Caco-2 (cell line): ENCODE measurements at regions of chr6 and their contacts with region 1.

Region 1: GRCh38 chr6:143677891-143678791 is at the start of gene PHACTR2:
- DNase-seq: peak; percentile 85 to 86
- H3K4me3 ChIP-seq: peak within 1 kb of the TSS; percentile 88
- H3K4me3 Mint-ChIP-seq: peak within 1 kb of the TSS; percentile 82
- H3K27ac Mint-ChIP-seq: peak within 1 kb of the TSS; percentile 70
- H3K4me1 ChIP-seq: peaks cover 40% of the 10 kb centered on the region
- H3K4me1 Mint-ChIP-seq: peaks cover 18% of the 10 kb centered on the region
- H3K27me3 ChIP-seq: no peaks in the 10 kb centered on the region
- H3K27me3 Mint-ChIP-seq: no peaks in the 10 kb centered on the region
- CTCF ChIP-seq: no peak
- total RNA-seq, gene PHACTR2: 80.8 and 100 TPM in 2 replicates

Region 2: GRCh38 chr6:143652841-143653331 is 25.3 kb before region 1 on chr6:
- CTCF ChIA-PET with region 1: no interaction called
- POLR2A ChIA-PET with region 1: no interaction called
- intact Hi-C with region 1: loop called (anchors 1 kb)
- DNase-seq: peak; percentile 59 to 71
- H3K4me3 ChIP-seq: no peak overlapping the region
- H3K4me3 Mint-ChIP-seq: peak overlapping the region; percentile 51
- H3K27ac Mint-ChIP-seq: peak overlapping the region; percentile 84
- H3K4me1 ChIP-seq: peaks cover 43% of the 10 kb centered on the region
- H3K4me1 Mint-ChIP-seq: peaks cover 45% of the 10 kb centered on the region
- H3K27me3 ChIP-seq: no peaks in the 10 kb centered on the region
- H3K27me3 Mint-ChIP-seq: no peaks in the 10 kb centered on the region
- CTCF ChIP-seq: no peak

Region 3: DNA sequence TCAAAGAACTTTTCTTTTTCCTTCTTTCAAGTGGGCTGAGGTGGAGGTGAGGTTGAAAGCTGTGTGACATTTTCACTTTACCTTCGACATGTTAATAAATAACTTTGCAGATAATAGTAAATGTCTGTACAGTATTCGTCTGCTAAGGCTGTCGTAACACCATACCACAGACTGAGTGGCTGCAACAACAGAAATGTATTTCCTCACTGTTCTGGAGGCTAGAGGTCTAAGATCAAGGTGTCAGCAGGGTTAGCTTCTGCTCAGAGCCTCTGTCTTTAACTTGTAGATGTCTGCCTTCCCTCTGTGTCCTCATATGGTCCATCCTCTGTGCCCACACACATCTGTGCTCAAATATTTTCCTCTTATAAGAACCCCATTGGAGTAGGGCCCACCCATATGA is 14.6 kb after region 1 on chr6:
- CTCF ChIA-PET with region 1: no interaction called
- POLR2A ChIA-PET with region 1: no interaction called
- intact Hi-C with region 1: loop called (anchors 2 kb)
- DNase-seq: peak; percentile 61 to 65
- H3K4me3 ChIP-seq: no peak overlapping the region
- H3K4me3 Mint-ChIP-seq: no peak overlapping the region
- H3K27ac Mint-ChIP-seq: no peak overlapping the region
- H3K4me1 ChIP-seq: peaks cover 66% of the 10 kb centered on the region
- H3K4me1 Mint-ChIP-seq: peaks cover 45% of the 10 kb centered on the region
- H3K27me3 ChIP-seq: no peaks in the 10 kb centered on the region
- H3K27me3 Mint-ChIP-seq: no peaks in the 10 kb centered on the region
- CTCF ChIP-seq: no peak

Region 4: DNA sequence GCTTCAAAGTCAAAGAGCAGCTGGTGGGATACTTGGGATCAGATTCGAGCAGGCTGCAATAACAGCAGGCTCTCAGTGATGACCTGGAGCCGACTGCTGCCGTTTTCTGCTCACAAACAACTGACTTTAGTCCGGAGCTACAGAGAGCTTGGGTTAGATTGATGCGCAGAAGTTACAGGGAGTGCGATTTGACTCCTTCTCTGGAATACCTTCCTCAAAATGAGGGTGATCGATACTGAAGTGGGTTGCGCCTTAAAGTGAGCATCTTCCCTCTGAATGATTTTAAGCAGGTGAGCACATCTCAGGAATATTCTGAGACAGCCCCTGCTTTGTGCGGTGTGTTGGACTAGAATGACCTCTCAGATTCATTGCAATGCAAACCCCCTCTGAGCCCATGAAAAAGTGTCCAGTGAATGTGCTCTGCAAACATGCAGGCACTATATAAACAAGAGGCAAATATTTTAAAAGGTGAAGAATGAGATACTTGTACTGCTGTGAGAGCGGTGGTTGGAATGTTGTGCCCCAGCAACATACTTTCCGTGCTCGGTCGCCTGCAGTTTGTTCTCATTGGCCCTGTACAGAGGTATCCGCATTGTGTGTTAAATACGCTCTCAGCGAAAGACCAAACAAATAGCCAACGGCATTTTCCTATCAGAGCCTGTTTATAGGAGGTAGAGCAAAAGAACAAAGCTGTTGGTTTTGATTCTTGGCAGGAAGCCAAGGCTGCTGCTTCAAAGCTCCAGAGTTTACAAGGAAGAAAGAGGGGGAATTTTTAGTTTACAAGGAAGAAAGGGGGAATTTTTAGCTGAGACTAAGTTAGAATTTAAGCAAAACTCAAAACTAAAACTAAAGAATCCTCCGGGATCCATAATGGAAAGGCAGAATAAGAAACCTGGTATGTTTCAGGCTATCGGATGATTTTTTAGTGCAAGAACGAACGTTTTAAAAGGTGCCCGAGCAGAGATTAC is 67.3 kb after region 1 on chr6:
- CTCF ChIA-PET with region 1: no interaction called
- POLR2A ChIA-PET with region 1: no interaction called
- intact Hi-C with region 1: loop called (anchors 1 kb)
- DNase-seq: peak; percentile 81 to 89
- H3K4me3 ChIP-seq: peak overlapping the region; percentile 21
- H3K4me3 Mint-ChIP-seq: peak overlapping the region; percentile 69
- H3K27ac Mint-ChIP-seq: peak overlapping the region; percentile 95
- H3K4me1 ChIP-seq: peaks cover 62% of the 10 kb centered on the region
- H3K4me1 Mint-ChIP-seq: peaks cover 50% of the 10 kb centered on the region
- H3K27me3 ChIP-seq: no peaks in the 10 kb centered on the region
- H3K27me3 Mint-ChIP-seq: no peaks in the 10 kb centered on the region
- CTCF ChIP-seq: no peak

Region 5: GRCh38 chr6:143842902-143843676 is 164.9 kb after region 1 on chr6 and contains the start of gene LTV1:
- CTCF ChIA-PET with region 1: no interaction called
- POLR2A ChIA-PET with region 1: interaction called, 3 read pairs
- intact Hi-C with region 1: loop called (anchors 5 kb)
- DNase-seq: peak; percentile 96
- H3K4me3 ChIP-seq: peak within 1 kb of the TSS; percentile 78
- H3K4me3 Mint-ChIP-seq: peak within 1 kb of the TSS; percentile 92
- H3K27ac Mint-ChIP-seq: peak within 1 kb of the TSS; percentile 94
- H3K4me1 ChIP-seq: peaks cover 7% of the 10 kb centered on the region; the same call in 1 of the 2 replicates
- H3K4me1 Mint-ChIP-seq: peaks cover 7% of the 10 kb centered on the region
- H3K27me3 ChIP-seq: no peaks in the 10 kb centered on the region
- H3K27me3 Mint-ChIP-seq: no peaks in the 10 kb centered on the region
- CTCF ChIP-seq: no peak
- total RNA-seq, gene LTV1: 36.2 and 38.1 TPM in 2 replicates